ENCODE measurements at regions of chr2 and their contacts with region 1.

Region 1: DNA sequence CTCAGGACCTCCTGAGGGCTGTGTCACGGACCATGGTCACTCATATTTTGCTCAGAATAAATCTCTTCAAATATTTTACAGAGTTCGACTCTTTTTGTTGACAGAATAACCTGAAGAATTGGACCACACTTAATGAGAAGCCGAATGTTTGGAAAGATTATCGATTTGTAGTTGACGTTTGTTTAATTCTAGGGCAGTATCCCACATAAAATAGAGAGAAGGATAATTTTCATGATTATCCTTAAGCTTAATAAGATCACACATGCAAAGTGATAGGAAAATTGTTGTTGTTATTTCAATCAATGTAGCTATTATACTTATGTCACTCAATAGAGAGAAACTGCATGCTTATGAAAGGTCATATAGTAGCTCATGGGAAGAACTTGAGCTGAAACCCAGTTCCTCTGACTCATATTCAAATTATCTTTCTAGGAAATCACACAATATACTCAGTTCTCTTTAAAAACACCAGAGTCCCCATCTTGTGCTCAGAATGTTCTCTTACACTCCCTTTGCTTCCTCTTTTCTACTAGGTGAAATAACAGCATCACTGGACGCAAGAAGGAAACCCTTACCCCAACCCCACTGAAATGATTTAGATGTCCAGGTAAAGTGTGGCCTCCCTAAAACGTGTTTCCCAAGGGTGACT is 982.1 kb downstream of the TSN start:
- DNase-seq: peak; percentile 51
- ATAC-seq: peak; percentile 59
- H3K4me3 ChIP-seq: no peak overlapping the region
- H3K27ac ChIP-seq: no peak overlapping the region
- H3K4me1 ChIP-seq: no peaks in the 10 kb centered on the region; the same call in 1 of the 2 replicates
- H3K27me3 ChIP-seq: no peaks in the 10 kb centered on the region
- CTCF ChIP-seq: peak in 1 of 3 experiments; percentile 41; a peak in 1 of 6 replicates
- EP300 ChIP-seq: peak; percentile 58 to 70; a peak in 3 of 4 replicates
- POLR2A ChIP-seq: no peak
- RAD21 ChIP-seq: peak; percentile 54; the same call in 1 of the 2 replicates

Region 2: GRCh38 chr2:122433123-122433754 is 304.3 kb before region 1 on chr2:
- CTCF ChIA-PET with region 1: no interaction called
- POLR2A ChIA-PET with region 1: no interaction called
- RAD21 ChIA-PET with region 1: interaction called, 3 read pairs
- SMC1A ChIA-PET with region 1: no interaction called
- in situ Hi-C with region 1: no loop called
- intact Hi-C with region 1: loop called (anchors 5 kb)
- DNase-seq: peak; percentile 13
- ATAC-seq: peak; percentile 80
- H3K4me3 ChIP-seq: no peak overlapping the region
- H3K27ac ChIP-seq: no peak overlapping the region
- H3K4me1 ChIP-seq: no peaks in the 10 kb centered on the region
- H3K27me3 ChIP-seq: no peaks in the 10 kb centered on the region
- CTCF ChIP-seq: no peak
- EP300 ChIP-seq: no peak
- POLR2A ChIP-seq: no peak
- RAD21 ChIP-seq: no peak

Region 3: GRCh38 chr2:122660786-122661634 is 76.5 kb before region 1 on chr2:
- CTCF ChIA-PET with region 1: interaction called, 3 read pairs
- POLR2A ChIA-PET with region 1: no interaction called
- RAD21 ChIA-PET with region 1: interaction called, 6 read pairs
- SMC1A ChIA-PET with region 1: interaction called, 23 read pairs
- in situ Hi-C with region 1: no loop called
- intact Hi-C with region 1: no loop called
- DNase-seq: no peak
- ATAC-seq: peak; percentile 29; the same call in 2 of the 3 replicates
- H3K4me3 ChIP-seq: no peak overlapping the region
- H3K27ac ChIP-seq: no peak overlapping the region
- H3K4me1 ChIP-seq: no peaks in the 10 kb centered on the region
- H3K27me3 ChIP-seq: no peaks in the 10 kb centered on the region
- CTCF ChIP-seq: no peak
- EP300 ChIP-seq: no peak
- POLR2A ChIP-seq: no peak
- RAD21 ChIP-seq: no peak

Region 4: DNA sequence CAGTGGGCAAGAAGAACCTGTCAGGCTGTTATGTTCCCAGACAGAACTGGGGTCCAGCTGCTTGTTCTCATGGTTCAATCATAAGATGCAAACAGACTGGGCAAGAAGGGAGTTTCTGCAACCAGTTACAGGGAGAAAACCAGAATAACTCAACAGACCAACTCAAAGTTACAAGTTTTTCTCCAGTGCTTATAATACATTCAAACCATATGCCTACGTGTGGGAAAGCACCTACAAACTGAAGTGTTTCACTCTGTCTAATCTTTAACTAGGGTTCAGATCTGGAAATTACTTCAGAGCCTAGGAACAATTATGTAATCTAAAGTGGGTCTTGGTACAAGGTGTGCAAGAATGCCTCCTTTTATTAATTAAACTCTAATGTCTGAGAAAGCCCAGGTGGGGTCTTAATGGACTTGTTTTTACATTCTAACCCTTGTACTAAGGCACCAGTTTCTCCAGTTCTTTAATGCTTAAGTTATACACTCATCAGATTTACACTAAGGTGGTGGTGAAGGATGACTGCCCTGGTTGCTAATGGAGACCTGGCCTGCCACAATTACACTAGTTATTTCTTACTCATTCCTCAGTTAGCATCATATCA is 30.2 kb before region 1 on chr2:
- CTCF ChIA-PET with region 1: interaction called, 25 read pairs
- POLR2A ChIA-PET with region 1: interaction called, 27 read pairs
- RAD21 ChIA-PET with region 1: interaction called, 172 read pairs
- SMC1A ChIA-PET with region 1: interaction called, 173 read pairs
- in situ Hi-C with region 1: no loop called
- intact Hi-C with region 1: loop called (anchors 1 kb)
- DNase-seq: peak; percentile 70
- ATAC-seq: peak; percentile 76
- H3K4me3 ChIP-seq: no peak overlapping the region
- H3K27ac ChIP-seq: peak overlapping the region; percentile 58
- H3K4me1 ChIP-seq: peaks cover 4% of the 10 kb centered on the region
- H3K27me3 ChIP-seq: no peaks in the 10 kb centered on the region
- CTCF ChIP-seq: no peak
- EP300 ChIP-seq: peak; percentile 84 to 93; a peak in 3 of 4 replicates
- POLR2A ChIP-seq: no peak
- RAD21 ChIP-seq: no peak

Region 5: DNA sequence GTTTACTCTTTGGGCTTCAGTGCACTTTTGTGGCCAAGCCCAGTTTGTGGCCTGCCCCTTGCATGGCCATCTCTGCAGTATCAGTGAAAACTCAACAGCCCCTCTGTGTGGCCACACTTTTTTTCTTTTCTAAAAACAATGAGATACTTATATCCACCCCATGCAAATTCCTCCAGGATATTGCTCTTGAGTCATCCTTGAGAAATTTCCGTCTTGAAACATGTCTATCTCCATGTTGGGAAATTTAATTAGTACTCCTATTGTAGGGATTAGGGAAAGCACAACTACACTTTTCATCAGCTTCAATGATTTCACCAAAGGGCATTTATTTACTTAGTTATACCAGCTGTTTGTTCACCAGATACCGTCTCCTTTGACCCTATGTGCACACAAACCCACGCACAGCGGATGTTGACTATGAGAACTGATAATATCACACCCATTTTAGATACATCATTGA is 11.0 kb after region 1 on chr2:
- CTCF ChIA-PET with region 1: interaction called, 7 read pairs
- POLR2A ChIA-PET with region 1: interaction called, 5 read pairs
- RAD21 ChIA-PET with region 1: interaction called, 15 read pairs
- SMC1A ChIA-PET with region 1: interaction called, 12 read pairs
- in situ Hi-C with region 1: no loop called
- intact Hi-C with region 1: no loop called
- DNase-seq: no peak
- ATAC-seq: peak; percentile 55
- H3K4me3 ChIP-seq: no peak overlapping the region
- H3K27ac ChIP-seq: no peak overlapping the region
- H3K4me1 ChIP-seq: no peaks in the 10 kb centered on the region
- H3K27me3 ChIP-seq: no peaks in the 10 kb centered on the region
- CTCF ChIP-seq: peak in 1 of 3 experiments; percentile 34; a peak in 2 of 6 replicates
- EP300 ChIP-seq: no peak
- POLR2A ChIP-seq: no peak
- RAD21 ChIP-seq: peak; percentile 51; the same call in 1 of the 2 replicates

Region 6: GRCh38 chr2:123144082-123144481 is 406.5 kb after region 1 on chr2:
- CTCF ChIA-PET with region 1: no interaction called
- POLR2A ChIA-PET with region 1: no interaction called
- RAD21 ChIA-PET with region 1: no interaction called
- SMC1A ChIA-PET with region 1: no interaction called
- in situ Hi-C with region 1: no loop called
- intact Hi-C with region 1: no loop called
- DNase-seq: no peak
- ATAC-seq: no peak
- H3K4me3 ChIP-seq: no peak overlapping the region
- H3K27ac ChIP-seq: no peak overlapping the region
- H3K4me1 ChIP-seq: no peaks in the 10 kb centered on the region
- H3K27me3 ChIP-seq: no peaks in the 10 kb centered on the region
- CTCF ChIP-seq: no peak
- EP300 ChIP-seq: no peak
- POLR2A ChIP-seq: no peak
- RAD21 ChIP-seq: no peak

Region 7: GRCh38 chr2:123438251-123438650 is 700.7 kb after region 1 on chr2:
- CTCF ChIA-PET with region 1: no interaction called
- POLR2A ChIA-PET with region 1: no interaction called
- RAD21 ChIA-PET with region 1: no interaction called
- SMC1A ChIA-PET with region 1: no interaction called
- in situ Hi-C with region 1: no loop called
- intact Hi-C with region 1: no loop called
- DNase-seq: no peak
- ATAC-seq: no peak
- H3K4me3 ChIP-seq: no peak overlapping the region
- H3K27ac ChIP-seq: no peak overlapping the region
- H3K4me1 ChIP-seq: no peaks in the 10 kb centered on the region
- H3K27me3 ChIP-seq: no peaks in the 10 kb centered on the region
- CTCF ChIP-seq: no peak
- EP300 ChIP-seq: no peak
- POLR2A ChIP-seq: no peak
- RAD21 ChIP-seq: no peak

Measured in GM12878 (cell line).